ENCODE measurements at regions of chr3 and their contacts with region 1.

Region 1: DNA sequence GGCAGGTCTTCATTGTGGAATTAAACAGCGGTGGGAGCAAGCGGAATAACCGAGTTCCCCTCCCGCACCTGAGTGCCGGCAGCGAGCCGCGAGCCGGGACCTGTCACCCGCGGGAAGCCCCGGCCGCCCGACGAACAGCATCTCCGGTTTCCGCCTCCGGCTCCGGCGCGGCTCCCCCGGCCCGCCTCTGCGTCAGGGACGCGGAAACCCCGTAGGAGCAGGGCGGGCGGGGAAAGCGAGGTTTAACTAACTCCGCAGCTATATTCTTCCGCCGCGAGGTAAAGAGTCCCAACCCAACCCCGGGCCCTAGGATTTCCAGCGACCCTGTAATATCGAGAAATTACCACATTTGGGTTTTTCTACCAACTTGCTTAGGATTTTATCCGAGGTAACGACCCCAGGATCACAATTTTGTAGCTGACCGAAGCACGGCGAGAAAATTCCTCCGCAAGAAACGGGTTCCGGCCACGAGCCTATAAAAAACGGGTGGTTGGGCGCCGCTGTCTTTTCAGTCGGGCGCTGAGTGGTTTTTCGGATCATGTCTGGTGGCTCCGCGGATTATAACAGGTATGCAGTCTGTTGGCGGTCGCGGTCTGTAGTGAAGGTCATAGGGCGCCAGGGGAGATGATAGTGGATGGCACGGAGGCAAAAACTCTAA is at the start of gene EIF4A2:
- DNase-seq: peak; percentile 60 to 94
- H3K4me3 ChIP-seq: peak within 1 kb of the TSS; percentile 88 to 94
- H3K27ac ChIP-seq: peak within 1 kb of the TSS; percentile 98
- H3K4me1 ChIP-seq: peaks cover 10 to 30% of the 10 kb centered on the region in 2 donors
- H3K27me3 ChIP-seq: no peaks in the 10 kb centered on the region
- CTCF ChIP-seq: no peak
- total RNA-seq, gene EIF4A2: 260 TPM

Region 2: DNA sequence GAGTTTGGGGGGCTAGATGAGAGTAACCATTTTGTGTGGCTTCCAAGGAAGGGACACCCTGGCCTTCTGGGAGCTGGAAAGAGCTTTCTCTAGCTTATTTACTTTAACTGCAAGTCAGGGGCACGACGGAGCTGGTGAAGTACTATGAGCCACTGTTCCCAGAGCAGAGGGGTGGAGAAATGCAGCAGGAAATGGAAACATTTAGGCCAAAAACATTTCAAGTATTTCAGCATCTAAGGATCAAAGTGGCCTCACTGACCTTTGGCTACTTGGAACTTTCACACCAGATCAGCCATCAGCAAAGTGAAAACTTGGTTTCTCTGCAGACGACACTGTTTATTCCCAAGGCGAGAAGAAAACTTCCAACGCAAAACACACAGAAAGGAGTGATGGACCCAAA is 429.1 kb before region 1 on chr3:
- intact Hi-C with region 1: no loop called
- DNase-seq: no peak
- H3K4me3 ChIP-seq: no peak overlapping the region
- H3K27ac ChIP-seq: no peak overlapping the region
- H3K4me1 ChIP-seq: no peaks in the 10 kb centered on the region
- H3K27me3 ChIP-seq: no peaks in the 10 kb centered on the region
- CTCF ChIP-seq: no peak

Region 3: DNA sequence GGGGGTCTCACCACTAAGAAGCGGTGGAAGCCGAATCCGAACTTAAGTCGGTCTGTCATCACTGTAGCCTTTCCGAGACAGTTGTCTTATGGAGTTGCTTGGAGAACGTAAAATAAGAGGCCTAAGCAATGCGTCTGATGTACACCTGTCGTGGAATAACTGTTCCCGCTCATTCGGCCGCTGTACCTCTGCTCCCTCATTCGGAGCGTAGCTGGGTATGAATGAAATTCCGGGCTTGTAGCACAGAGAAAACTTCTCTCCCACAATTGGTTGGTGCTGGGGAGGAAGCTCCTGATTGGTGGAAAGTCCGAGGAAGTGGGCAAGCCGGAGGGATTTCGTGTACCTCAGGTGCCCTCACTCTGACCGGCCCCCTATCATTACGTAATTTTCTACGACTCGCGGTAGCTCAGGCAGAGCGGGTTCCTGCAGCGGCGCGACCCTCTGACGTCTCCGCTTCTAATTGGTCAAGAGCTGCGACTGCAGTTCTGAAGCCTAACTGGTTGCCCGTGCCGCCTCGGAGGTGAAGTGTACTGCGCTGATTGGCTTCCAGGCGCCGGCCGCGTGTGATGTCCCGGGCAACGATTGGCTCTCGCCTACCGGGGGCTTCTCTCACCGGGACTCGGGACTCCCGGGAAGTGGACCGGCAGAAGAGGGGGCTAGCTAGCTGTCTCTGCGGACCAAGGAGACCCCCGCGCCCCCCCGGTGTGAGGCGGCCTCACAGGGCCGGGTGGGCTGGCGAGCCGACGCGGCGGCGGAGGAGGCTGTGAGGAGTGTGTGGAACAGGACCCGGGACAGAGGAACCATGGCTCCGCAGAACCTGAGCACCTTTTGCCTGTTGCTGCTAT is 212.9 kb before region 1 on chr3 and contains the start of gene DNAJB11:
- intact Hi-C with region 1: loop called (anchors 2 kb)
- DNase-seq: peak; percentile 97 to 100
- H3K4me3 ChIP-seq: peak within 1 kb of the TSS; percentile 98 to 99
- H3K27ac ChIP-seq: peak within 1 kb of the TSS; percentile 93 to 97
- H3K4me1 ChIP-seq: peaks cover 0 to 21% of the 10 kb centered on the region in 2 donors
- H3K27me3 ChIP-seq: no peaks in the 10 kb centered on the region
- CTCF ChIP-seq: no peak
- total RNA-seq, gene DNAJB11: 31.3 TPM

Region 4: GRCh38 chr3:186806089-186807055 is 23.2 kb after region 1 on chr3 and contains the start of gene RFC4:
- intact Hi-C with region 1: loop called (anchors 2 kb)
- DNase-seq: peak in 1 of 2 donors; percentile 92
- H3K4me3 ChIP-seq: peak within 1 kb of the TSS; percentile 76 to 83
- H3K27ac ChIP-seq: peak within 1 kb of the TSS; percentile 75 to 78
- H3K4me1 ChIP-seq: peaks cover 6 to 13% of the 10 kb centered on the region in 2 donors
- H3K27me3 ChIP-seq: no peaks in the 10 kb centered on the region
- CTCF ChIP-seq: no peak
- total RNA-seq, gene RFC4: 23.8 TPM

Region 5: GRCh38 chr3:186869253-186870100 is 86.3 kb after region 1 on chr3:
- intact Hi-C with region 1: no loop called
- DNase-seq: no peak
- H3K4me3 ChIP-seq: no peak overlapping the region
- H3K27ac ChIP-seq: no peak overlapping the region
- H3K4me1 ChIP-seq: no peaks in the 10 kb centered on the region
- H3K27me3 ChIP-seq: no peaks in the 10 kb centered on the region
- CTCF ChIP-seq: no peak